ENCODE measurements at regions of chr6 and their contacts with region 1.

Region 1: DNA sequence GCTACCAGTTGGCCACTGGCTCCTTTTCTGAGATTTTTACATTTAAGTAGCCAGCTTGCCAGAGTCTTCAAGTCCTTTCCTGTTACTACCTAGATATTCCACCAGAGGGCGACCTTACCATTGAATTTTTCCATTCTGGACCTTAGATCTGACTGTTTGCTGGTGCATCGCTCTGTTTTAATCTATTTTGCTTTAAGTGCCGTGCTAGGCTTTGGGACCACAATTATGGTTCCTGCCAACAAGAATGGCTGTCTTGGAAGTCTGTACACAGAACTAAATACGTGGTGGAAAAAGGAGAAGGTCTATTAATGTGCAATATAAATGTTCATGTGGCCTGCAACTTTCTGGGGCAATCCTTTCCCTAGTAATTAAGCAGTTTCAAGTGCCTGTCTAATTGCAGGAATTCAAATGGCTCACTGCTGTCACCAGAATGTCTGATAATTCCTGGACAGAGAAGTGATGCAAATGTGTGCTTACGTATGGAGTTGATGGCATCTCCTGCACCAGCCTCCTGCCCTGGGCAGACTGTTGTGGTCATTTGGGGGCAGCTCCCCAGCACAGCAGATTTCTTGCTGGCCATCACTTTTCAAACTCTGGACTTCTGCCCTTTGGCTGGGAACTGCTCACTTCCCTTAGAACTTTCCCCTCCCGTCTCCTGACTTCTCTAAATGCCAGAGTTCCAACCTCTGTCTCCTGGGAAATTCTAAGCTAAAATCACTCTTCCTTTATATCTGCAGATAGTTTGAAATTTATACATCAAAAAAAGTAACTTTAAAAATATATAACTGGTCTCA is 5.6 kb upstream of the HLA-DOA start:
- DNase-seq: no peak
- ATAC-seq: peak; percentile 62 to 71

Region 2: DNA sequence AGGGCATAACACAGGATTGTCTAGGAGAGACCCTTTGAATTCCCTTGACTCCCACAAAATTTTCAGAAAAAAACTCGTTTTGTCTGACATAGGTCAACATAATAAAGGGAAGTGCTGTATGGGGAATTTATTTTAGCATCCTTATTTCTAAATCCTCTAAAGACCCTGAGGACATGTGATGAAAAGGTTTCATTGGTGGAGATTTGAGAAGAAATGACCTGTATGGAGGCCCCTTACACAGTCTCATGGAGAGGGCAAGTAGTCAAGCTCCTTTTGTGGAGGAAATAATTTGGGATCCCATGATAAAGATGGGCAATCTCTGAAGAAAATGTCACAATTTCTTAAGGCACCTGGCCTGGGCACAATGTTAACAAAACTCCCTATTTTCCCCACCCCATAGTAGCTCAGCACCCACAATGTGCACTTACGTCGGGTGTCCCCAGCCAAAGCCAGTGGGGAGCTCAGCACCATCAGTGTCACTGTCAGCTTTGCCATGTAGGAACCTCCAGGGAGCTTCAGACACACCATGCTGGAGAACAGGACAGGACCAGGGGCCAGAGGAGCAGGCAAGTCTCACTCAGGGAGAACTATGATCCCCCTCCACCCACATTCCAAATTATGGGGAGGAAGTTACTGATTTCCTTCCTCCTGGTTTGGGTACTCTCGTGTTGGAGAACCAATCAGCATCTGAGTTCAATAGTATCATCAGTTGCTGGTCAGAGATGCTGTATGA is 485.2 kb before region 1 on chr6 and contains the start of gene HLA-DRB5:
- intact Hi-C with region 1: no loop called
- DNase-seq: peak; percentile 22
- ATAC-seq: peak; percentile 78 to 93
- total RNA-seq, gene HLA-DRB5: 27.1 to 82.9 TPM

Region 3: DNA sequence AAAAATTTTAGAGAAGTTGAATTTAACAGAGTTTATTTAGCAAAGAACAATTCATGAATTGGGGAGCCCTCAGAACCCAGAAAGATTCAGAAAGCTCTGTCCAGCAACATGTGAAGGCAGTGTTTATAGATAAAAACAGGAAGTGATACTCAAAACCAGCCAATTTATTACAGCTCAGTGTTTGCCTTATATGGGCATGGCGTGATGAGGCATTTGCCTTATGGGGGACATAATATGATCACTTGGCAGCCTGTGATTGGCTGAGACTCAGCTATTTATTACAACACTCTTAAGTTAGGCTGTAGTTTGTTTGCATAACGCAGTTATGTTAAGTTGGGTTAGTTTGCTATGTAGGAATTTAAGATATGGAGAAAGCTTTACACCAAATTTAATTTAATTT is 46.9 kb after region 1 on chr6:
- intact Hi-C with region 1: no loop called
- DNase-seq: no peak
- ATAC-seq: no peak

Region 4: DNA sequence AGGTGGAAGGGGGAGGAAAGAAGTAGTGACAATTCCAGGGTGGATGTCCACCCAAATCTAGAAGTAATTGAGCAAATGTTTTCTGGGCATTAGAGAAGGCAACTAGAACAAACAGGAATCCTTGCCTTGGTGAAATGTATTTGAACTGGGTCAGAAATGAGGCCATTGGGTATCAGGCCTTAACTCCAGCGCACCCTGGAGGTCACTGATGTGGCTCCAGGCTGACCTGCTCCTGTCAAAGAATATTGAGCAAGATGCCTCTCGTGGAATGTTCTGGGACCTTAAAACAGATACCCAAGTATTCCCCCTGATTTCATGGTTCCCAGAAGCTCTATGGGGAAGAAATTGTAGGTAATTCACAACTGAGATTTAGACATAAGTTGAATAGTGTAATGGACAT is 67.7 kb after region 1 on chr6:
- intact Hi-C with region 1: loop called in 1 of 2 experiments (anchors 5 kb)
- DNase-seq: no peak
- ATAC-seq: peak in 1 of 2 donors; percentile 75

Region 5: DNA sequence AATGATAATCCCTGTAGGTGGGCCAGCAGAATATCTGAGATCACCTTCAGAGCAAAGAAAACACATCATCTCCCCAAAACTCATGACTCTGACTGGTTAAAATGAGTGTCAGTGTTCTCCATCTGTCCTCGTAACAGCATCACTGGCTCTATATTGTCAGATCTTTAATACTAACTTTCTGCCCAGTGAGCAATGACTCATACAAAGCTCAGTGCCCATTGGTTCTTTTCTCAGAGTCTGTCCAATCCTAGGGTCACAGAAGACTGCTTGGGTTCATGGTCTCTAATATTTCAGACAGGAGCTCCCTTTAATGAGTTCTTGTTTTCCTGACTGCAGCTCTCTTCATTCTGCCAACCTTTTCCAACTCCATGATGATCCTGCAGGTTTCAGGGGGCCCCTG is 97.1 kb after region 1 on chr6:
- intact Hi-C with region 1: loop called in 1 of 2 experiments (anchors 10 kb)
- DNase-seq: no peak
- ATAC-seq: peak; percentile 92 to 94

Region 6: GRCh38 chr6:33126101-33126714 is 111.2 kb after region 1 on chr6:
- intact Hi-C with region 1: loop called in 1 of 2 experiments (anchors 10 kb)
- DNase-seq: peak; percentile 82
- ATAC-seq: peak in 1 of 2 donors; percentile 51

Region 7: GRCh38 chr6:33147807-33148666 is 133.0 kb after region 1 on chr6:
- intact Hi-C with region 1: no loop called
- DNase-seq: no peak
- ATAC-seq: no peak